ENCODE measurements at regions of chr9 and their contacts with region 1.

Region 1: DNA sequence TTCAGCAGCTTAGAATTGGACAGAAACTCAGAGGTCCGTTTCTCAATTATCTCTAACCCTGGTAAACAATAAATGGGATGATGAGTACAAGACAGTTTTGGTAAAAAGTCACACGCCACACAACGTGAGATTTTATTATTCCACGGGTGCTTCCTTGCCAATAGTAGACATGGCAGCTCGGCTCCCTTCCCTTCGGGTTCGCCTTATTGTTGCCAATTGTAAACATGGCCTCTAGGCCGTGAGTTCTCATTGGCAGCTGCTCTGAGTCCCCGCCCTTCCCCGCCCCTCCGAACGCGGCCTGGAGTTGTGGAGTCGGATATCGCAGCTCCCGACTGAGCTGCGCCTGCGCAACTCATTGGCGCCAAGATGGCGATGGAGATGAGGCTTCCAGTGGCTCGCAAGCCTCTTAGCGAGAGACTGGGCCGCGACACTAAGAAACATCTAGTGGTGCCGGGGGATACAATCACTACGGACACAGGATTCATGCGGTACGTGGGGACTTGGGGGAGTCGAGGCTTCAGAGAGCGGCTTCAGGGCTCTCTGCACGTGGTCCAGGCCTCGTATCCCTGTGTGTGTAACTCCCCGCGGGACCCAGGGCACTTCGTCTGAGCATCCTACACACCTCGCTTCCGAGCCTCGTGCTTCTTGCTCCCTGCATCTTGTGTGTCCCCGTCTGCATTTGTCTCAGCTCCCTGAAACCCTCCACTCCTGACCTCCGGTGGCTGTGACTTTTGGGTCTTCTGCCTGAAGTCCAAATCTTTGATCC is at the start of gene EXOSC2:
- DNase-seq: peak; percentile 88
- H3K4me3 Mint-ChIP-seq: peak within 1 kb of the TSS; percentile 99
- H3K27ac Mint-ChIP-seq: peak within 1 kb of the TSS; percentile 97
- H3K4me1 Mint-ChIP-seq: peaks cover 54% of the 10 kb centered on the region
- H3K27me3 Mint-ChIP-seq: peaks cover 3% of the 10 kb centered on the region
- total RNA-seq, gene EXOSC2: 107 TPM in 2 replicates

Region 2: DNA sequence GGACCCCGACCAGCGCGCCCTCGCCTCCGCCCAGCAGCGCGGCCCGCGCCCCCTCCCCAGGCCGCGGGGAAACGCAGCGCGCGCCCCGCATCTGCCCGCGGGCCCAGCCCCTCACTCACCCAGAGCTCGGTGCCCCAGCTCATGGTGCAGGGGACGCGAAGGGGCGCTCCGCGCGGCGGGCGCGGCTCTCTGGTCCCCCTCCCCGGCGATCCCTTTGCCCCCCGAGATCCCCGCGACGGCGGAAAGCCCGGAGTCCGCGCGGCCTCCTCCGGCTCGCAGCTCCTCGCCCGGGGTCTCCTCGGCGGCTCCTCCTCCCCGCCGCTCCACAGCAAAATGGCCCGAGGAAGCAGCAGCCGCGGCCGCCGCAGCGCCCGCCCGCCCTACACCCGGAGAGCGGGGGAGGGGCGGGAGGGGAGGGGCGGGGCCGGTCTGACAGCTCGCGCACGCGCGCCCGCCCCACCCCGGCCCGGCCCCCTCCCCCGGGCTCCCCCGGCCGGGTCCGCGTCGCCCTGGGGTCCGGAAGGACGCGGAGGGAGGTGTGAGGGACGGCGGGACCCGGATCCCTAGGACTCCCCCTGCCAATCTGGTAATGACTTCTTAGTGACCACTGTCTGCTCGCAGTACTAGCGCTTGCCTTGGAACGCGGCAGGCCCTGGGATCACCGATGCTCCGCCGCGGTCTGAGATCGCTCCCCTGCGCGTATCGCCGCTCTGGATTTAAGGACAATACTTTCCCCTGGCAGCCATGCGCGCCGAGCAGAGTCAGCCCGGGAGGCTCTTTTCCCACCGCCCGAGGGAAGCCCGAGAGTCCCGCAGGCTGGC is 650.6 kb before region 1 on chr9 and contains the start of gene FNBP1:
- intact Hi-C with region 1: no loop called
- DNase-seq: peak; percentile 78
- H3K4me3 Mint-ChIP-seq: peak within 1 kb of the TSS; percentile 97
- H3K27ac Mint-ChIP-seq: peak within 1 kb of the TSS; percentile 99
- H3K4me1 Mint-ChIP-seq: peaks cover 55% of the 10 kb centered on the region
- H3K27me3 Mint-ChIP-seq: no peaks in the 10 kb centered on the region
- total RNA-seq, gene FNBP1: 195 and 202 TPM in 2 replicates

Region 3: GRCh38 chr9:130578865-130579737 is 114.5 kb before region 1 on chr9 and contains the start of gene FUBP3:
- intact Hi-C with region 1: loop called (anchors 2 kb)
- DNase-seq: peak; percentile 89
- H3K4me3 Mint-ChIP-seq: peak within 1 kb of the TSS; percentile 84
- H3K27ac Mint-ChIP-seq: peak within 1 kb of the TSS; percentile 84
- H3K4me1 Mint-ChIP-seq: peaks cover 27% of the 10 kb centered on the region
- H3K27me3 Mint-ChIP-seq: peaks cover 2% of the 10 kb centered on the region
- total RNA-seq, gene FUBP3: 52.6 and 54.6 TPM in 2 replicates

Region 4: DNA sequence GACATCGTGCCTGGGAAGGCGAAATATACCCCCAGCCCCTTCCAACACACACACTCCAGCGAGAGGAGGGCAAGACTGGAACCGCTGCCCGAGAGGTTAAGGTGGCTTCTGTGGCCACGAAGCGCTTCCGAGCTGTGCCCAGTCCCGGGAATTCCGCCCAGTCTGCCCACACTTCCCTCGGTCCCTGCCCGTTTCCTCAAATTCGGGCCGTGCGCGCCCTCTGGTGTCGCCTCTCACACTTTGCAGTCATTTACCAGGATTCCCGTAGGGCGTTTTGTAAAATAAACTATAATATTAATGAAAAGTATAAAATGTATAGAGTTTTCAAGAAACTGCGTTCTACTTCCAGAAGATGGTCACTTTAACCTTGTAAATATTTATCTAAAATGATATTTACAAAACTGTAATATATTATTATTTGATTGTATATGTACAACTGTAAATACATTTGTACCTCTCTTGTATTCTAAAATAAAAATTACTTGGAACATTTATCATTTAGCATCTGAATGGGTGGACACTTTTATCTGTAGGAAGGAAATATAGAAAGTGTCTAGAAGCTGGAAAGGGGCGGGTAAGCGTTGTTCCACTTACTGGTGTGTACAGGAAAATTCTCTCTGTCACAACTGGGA is 11.0 kb before region 1 on chr9:
- intact Hi-C with region 1: loop called (anchors 1 kb)
- DNase-seq: peak; percentile 24
- H3K4me3 Mint-ChIP-seq: peak overlapping the region; percentile 87
- H3K27ac Mint-ChIP-seq: peak overlapping the region; percentile 76
- H3K4me1 Mint-ChIP-seq: peaks cover 10% of the 10 kb centered on the region
- H3K27me3 Mint-ChIP-seq: peaks cover 28% of the 10 kb centered on the region

Region 5: GRCh38 chr9:130707225-130707976 is 13.8 kb after region 1 on chr9:
- intact Hi-C with region 1: loop called (anchors 1 kb)
- DNase-seq: peak; percentile 52
- H3K4me3 Mint-ChIP-seq: no peak overlapping the region
- H3K27ac Mint-ChIP-seq: peak overlapping the region; percentile 56
- H3K4me1 Mint-ChIP-seq: peaks cover 3% of the 10 kb centered on the region
- H3K27me3 Mint-ChIP-seq: no peaks in the 10 kb centered on the region

Region 6: GRCh38 chr9:130732131-130732530 is 38.5 kb after region 1 on chr9:
- intact Hi-C with region 1: no loop called
- DNase-seq: no peak
- H3K4me3 Mint-ChIP-seq: no peak overlapping the region
- H3K27ac Mint-ChIP-seq: no peak overlapping the region
- H3K4me1 Mint-ChIP-seq: peaks cover 15% of the 10 kb centered on the region
- H3K27me3 Mint-ChIP-seq: peaks cover 2% of the 10 kb centered on the region

Region 7: DNA sequence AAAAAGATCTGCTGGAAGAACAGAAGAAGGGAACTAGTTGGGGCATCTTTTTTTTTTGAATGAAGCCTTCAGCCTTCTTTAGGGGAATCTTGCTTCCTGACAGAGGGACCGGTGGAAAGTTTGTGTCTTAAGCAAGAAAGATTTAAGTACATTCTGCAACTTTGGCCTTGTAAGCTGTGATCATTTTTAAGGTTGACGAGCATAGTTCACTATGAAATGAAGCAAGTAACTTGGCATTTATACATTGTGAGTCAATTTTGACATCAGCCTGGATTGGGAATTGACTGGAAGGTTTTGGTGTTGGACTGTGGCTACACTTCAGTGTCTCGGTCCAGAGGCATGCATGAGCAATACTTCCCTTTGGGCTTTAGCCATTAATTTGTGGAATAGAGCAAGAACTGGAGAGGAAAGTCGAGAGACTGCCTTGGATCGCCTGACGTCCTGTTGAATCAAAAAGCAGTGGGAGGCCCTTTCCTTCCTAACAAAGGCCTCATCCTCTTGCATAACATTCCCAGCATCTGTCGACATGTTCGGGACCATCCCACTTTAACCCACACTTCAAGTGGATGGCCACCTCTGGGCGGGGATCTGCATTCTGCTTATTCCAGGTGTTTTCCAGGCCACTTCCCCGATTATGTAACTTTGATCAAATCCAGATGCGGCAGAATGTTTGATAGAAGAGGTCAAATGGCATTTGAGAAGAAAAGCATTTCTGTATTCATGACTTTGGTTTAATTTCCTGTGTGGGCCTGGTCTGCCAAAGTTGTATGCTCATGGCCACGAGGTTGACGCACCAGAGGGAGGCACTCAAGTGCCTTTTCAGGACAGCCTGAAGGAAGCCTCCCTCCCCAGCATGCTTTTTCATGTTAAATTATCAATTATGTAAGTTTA is 154.0 kb after region 1 on chr9:
- intact Hi-C with region 1: no loop called
- DNase-seq: no peak
- H3K4me3 Mint-ChIP-seq: no peak overlapping the region
- H3K27ac Mint-ChIP-seq: no peak overlapping the region
- H3K4me1 Mint-ChIP-seq: peaks cover 11% of the 10 kb centered on the region
- H3K27me3 Mint-ChIP-seq: peaks cover 1% of the 10 kb centered on the region